B cell (primary cell): ENCODE measurements at regions of chr1 and their contacts with region 1.

Region 1: GRCh38 chr1:203290261-203291089 is 14.8 kb upstream of the BTG2 start:
- DNase-seq: peak; percentile 98
- ATAC-seq: peak; percentile 40
- H3K4me3 ChIP-seq: peak overlapping the region; percentile 45 to 66 (median 56)
- H3K4me3 Mint-ChIP-seq: peak overlapping the region; percentile 88
- H3K27ac ChIP-seq: peak overlapping the region; percentile 99 to 100
- H3K27ac Mint-ChIP-seq: peak overlapping the region; percentile 95
- H3K4me1 ChIP-seq: peaks cover 70 to 90% of the 10 kb centered on the region in 2 donors
- H3K4me1 Mint-ChIP-seq: peaks cover 87% of the 10 kb centered on the region
- H3K27me3 ChIP-seq: no peaks in the 10 kb centered on the region
- H3K27me3 Mint-ChIP-seq: no peaks in the 10 kb centered on the region
- CTCF ChIP-seq: no peak

Region 2: DNA sequence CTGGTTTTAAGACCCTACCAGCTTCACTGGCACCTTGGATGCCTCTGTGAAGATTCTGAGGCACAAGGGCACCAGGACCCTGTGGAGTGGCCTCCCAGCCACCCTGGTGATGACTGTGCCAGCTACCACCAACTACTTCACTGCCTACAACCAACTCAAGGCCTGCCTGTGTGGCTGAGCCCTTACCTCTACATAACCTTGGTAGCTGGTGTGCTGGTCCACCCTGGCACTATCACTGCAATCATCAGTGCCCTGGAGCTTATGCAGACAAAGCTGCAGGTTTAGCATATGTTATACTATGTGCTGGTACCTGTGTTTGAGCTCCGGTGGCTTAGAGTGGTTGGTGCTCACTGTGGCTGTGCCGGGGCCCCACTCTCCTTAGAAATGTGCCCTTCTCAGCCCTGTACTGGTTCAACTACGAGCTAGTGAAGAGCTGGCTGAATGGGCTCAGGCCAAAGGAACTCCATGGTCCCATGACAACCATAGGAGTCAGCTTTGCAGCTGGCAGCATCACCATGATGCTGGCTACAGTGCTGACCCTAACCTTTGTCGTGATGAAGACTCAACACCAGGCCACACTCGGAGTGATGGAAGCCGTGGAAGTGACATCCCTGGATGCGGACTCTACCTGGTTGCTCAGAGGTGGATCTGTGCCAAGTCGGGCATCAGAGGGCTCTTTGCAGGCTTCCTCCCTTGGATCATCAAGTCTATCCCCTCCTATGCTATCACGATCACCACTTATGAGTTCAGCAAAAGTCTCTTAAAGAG is 494.0 kb before region 1 on chr1:
- CTCF ChIA-PET with region 1: no interaction called
- POLR2A ChIA-PET with region 1: no interaction called
- intact Hi-C with region 1: no loop called
- DNase-seq: no peak
- ATAC-seq: no peak
- H3K4me3 ChIP-seq: no peak overlapping the region
- H3K4me3 Mint-ChIP-seq: no peak overlapping the region
- H3K27ac ChIP-seq: no peak overlapping the region
- H3K27ac Mint-ChIP-seq: no peak overlapping the region
- H3K4me1 ChIP-seq: peaks cover 19 to 29% of the 10 kb centered on the region in 2 donors
- H3K4me1 Mint-ChIP-seq: peaks cover 49% of the 10 kb centered on the region
- H3K27me3 ChIP-seq: no peaks in the 10 kb centered on the region
- H3K27me3 Mint-ChIP-seq: no peaks in the 10 kb centered on the region
- CTCF ChIP-seq: no peak

Region 3: DNA sequence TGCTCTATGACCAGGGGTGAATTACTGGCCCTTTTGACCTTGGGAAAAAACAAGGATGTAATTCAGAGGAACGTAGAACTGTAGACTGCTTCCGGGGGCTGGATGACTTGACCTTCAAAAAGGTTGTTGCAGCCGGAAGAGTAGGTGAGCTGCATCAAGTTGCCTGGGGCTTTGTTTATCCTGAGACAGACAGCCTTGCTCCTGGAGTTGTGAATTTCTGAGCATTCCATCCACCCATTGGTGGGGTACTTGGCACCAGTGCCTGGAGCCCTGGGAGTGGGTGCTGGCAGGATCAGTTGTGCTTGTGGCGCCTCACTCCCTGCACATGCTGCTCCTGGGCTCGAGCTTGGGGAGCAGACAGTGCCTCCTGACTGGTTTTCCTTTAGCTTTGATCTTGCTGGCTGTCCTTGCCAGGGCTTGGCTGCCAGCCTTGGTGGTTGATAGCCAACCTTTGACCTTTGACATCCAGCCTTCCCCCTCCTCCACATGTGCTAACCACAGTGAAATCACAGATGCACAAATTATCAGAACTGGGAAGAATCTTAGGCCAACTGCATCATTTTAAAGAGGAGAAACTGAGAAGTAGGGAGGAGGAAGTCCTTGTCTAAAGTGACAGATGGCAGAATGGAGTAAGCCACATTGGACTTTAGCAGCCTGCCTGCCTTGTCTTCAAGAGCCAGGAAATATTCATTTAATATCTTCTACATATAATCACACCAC is 188.4 kb before region 1 on chr1:
- CTCF ChIA-PET with region 1: no interaction called
- POLR2A ChIA-PET with region 1: no interaction called
- intact Hi-C with region 1: no loop called
- DNase-seq: no peak
- ATAC-seq: no peak
- H3K4me3 ChIP-seq: no peak overlapping the region
- H3K4me3 Mint-ChIP-seq: no peak overlapping the region
- H3K27ac ChIP-seq: no peak overlapping the region
- H3K27ac Mint-ChIP-seq: no peak overlapping the region
- H3K4me1 ChIP-seq: no peaks in the 10 kb centered on the region
- H3K4me1 Mint-ChIP-seq: no peaks in the 10 kb centered on the region
- H3K27me3 ChIP-seq: peaks cover 0 to 3% (median under 1%) of the 10 kb centered on the region in 4 experiments
- H3K27me3 Mint-ChIP-seq: peaks cover 34% of the 10 kb centered on the region
- CTCF ChIP-seq: no peak

Region 4: DNA sequence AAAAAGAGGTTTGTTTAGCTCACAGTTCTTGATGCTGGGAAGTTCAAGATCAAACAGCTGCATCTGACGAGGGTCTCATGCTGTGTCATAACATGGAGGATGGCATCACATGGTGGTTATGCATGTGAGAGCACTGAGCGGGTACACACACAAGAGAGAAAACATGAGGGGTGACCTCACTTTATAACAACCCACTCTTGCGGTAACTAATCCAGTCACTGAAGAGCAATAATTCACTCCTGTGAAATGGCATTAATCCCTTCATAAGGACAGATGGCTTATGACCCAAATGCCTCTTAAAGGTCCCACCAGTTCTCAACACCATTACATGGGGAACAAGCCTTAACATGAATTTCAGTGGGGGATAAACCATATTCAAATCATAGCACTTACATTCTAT is 37.8 kb before region 1 on chr1:
- CTCF ChIA-PET with region 1: no interaction called
- POLR2A ChIA-PET with region 1: no interaction called
- intact Hi-C with region 1: no loop called
- DNase-seq: no peak
- ATAC-seq: no peak
- H3K4me3 ChIP-seq: no peak overlapping the region
- H3K4me3 Mint-ChIP-seq: no peak overlapping the region
- H3K27ac ChIP-seq: no peak overlapping the region
- H3K27ac Mint-ChIP-seq: no peak overlapping the region
- H3K4me1 ChIP-seq: no peaks in the 10 kb centered on the region
- H3K4me1 Mint-ChIP-seq: no peaks in the 10 kb centered on the region
- H3K27me3 ChIP-seq: peaks cover 0 to 4% (median 0%) of the 10 kb centered on the region in 4 experiments
- H3K27me3 Mint-ChIP-seq: peaks cover 31% of the 10 kb centered on the region
- CTCF ChIP-seq: no peak

Region 5: GRCh38 chr1:203304919-203305808 is 14.7 kb after region 1 on chr1 and contains the start of gene BTG2:
- CTCF ChIA-PET with region 1: interaction called, 441 read pairs
- POLR2A ChIA-PET with region 1: interaction called, 422 read pairs
- intact Hi-C with region 1: loop called (anchors 1 kb)
- DNase-seq: peak; percentile 96
- ATAC-seq: peak; percentile 80
- H3K4me3 ChIP-seq: peak within 1 kb of the TSS; percentile 96 to 99 (median 99)
- H3K4me3 Mint-ChIP-seq: peak within 1 kb of the TSS; percentile 99
- H3K27ac ChIP-seq: peak within 1 kb of the TSS; percentile 100
- H3K27ac Mint-ChIP-seq: peak within 1 kb of the TSS; percentile 99
- H3K4me1 ChIP-seq: peaks cover 65 to 78% of the 10 kb centered on the region in 2 donors
- H3K4me1 Mint-ChIP-seq: peaks cover 70% of the 10 kb centered on the region
- H3K27me3 ChIP-seq: no peaks in the 10 kb centered on the region
- H3K27me3 Mint-ChIP-seq: no peaks in the 10 kb centered on the region
- CTCF ChIP-seq: no peak
- total RNA-seq, gene BTG2: 505 and 508 TPM in 2 replicates